Heart left ventricle (tissue), 16 donors: ENCODE measurements at regions of chr13 and their contacts with region 1.

Region 1: GRCh38 chr13:44191504-44192171 is 182.0 kb upstream of the SERP2 start:
- DNase-seq: peak in 4 of 5 donors; percentile 38 to 62 (median 58)
- ATAC-seq: peak; percentile 89 to 94 (median 94)
- H3K4me3 ChIP-seq: peak overlapping the region in 5 of 12 donors; percentile 9 to 28 (median 10)
- H3K27ac ChIP-seq: peak overlapping the region in 7 of 12 donors; percentile 13 to 62 (median 32)
- H3K4me1 ChIP-seq: peaks cover 0 to 7% (median 0%) of the 10 kb centered on the region in 12 donors
- H3K27me3 ChIP-seq: no peaks in the 10 kb centered on the region
- CTCF ChIP-seq: peak; percentile 57 to 85 (median 75)
- POLR2A ChIP-seq: no peak

Region 2: DNA sequence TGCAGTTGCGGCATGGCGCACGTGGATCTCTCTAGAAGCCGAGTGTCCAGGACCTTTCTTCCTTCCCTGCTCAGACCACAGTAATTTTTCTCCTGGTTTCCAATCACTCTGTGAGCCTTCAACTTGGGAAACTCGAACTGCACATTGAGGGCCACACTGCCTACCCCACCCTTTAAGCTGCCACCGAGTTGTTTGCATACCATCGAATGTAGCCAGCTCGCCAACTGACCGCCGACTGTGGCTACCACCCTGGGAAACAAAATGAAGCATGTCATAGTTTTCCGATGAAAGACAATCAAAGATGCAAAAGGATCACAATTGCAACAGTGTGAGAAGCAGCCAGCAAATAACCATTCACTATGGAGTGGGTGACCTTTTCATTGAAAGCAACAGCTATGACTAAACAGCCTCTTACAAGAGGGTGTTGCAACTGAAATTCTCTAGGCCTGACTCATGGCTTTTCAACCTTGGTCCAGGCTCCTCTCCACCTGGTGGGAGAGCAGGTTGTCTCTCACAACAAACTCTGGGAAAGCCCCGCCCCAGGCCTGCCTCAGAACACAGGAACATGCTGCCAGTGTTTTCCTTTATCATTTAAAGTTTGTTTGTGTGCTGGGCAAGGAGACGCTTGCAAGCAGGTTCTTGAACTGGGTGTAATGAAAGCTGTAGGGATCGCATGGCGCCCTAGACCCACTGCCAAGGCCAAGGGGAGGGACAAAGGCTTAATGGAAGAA is 40.3 kb after region 1 on chr13:
- intact Hi-C with region 1: loop called in 5 of 10 experiments (anchors 2 to 5 kb)
- DNase-seq: peak in 1 of 5 donors; percentile 72
- ATAC-seq: peak in 3 of 4 donors; percentile 46 to 96 (median 94)
- H3K4me3 ChIP-seq: no peak overlapping the region
- H3K27ac ChIP-seq: peak overlapping the region in 5 of 12 donors; percentile 11 to 47 (median 15)
- H3K4me1 ChIP-seq: peaks cover 10 to 27% (median 18%) of the 10 kb centered on the region in 12 donors
- H3K27me3 ChIP-seq: no peaks in the 10 kb centered on the region
- CTCF ChIP-seq: peak in 1 of 12 donors; percentile 11
- POLR2A ChIP-seq: no peak

Region 3: GRCh38 chr13:44249431-44249836 is 57.8 kb after region 1 on chr13:
- intact Hi-C with region 1: no loop called
- DNase-seq: peak; percentile 36 to 79 (median 48)
- ATAC-seq: peak; percentile 56 to 70 (median 60)
- H3K4me3 ChIP-seq: no peak overlapping the region
- H3K27ac ChIP-seq: peak overlapping the region; percentile 28 to 78 (median 66)
- H3K4me1 ChIP-seq: peaks cover 0 to 38% (median 12%) of the 10 kb centered on the region in 12 donors
- H3K27me3 ChIP-seq: no peaks in the 10 kb centered on the region
- CTCF ChIP-seq: no peak
- POLR2A ChIP-seq: no peak

Region 4: GRCh38 chr13:44280456-44280855 is 88.8 kb after region 1 on chr13:
- intact Hi-C with region 1: loop called in 1 of 10 experiments (anchors 10 kb)
- DNase-seq: no peak
- ATAC-seq: no peak
- H3K4me3 ChIP-seq: no peak overlapping the region
- H3K27ac ChIP-seq: no peak overlapping the region
- H3K4me1 ChIP-seq: peaks cover 0 to 19% (median 6%) of the 10 kb centered on the region in 12 donors
- H3K27me3 ChIP-seq: no peaks in the 10 kb centered on the region
- CTCF ChIP-seq: no peak
- POLR2A ChIP-seq: no peak